Ovary (tissue), 10 donors: ENCODE measurements at regions of chr2 and their contacts with region 1.

Region 1: GRCh38 chr2:132547074-132547687 is 122.8 kb downstream of the LYPD1 start:
- DNase-seq: peak; percentile 24 to 68 (median 44)
- H3K4me3 ChIP-seq: no peak overlapping the region
- H3K27ac ChIP-seq: no peak overlapping the region
- H3K4me1 ChIP-seq: no peaks in the 10 kb centered on the region
- H3K27me3 ChIP-seq: no peaks in the 10 kb centered on the region
- CTCF ChIP-seq: peak in 1 of 3 donors; percentile 38
- EP300 ChIP-seq: no peak
- POLR2A ChIP-seq: no peak

Region 2: GRCh38 chr2:132384491-132385151 is 162.6 kb before region 1 on chr2:
- intact Hi-C with region 1: no loop called
- DNase-seq: no peak
- H3K4me3 ChIP-seq: no peak overlapping the region
- H3K27ac ChIP-seq: no peak overlapping the region
- H3K4me1 ChIP-seq: no peaks in the 10 kb centered on the region
- H3K27me3 ChIP-seq: no peaks in the 10 kb centered on the region
- CTCF ChIP-seq: no peak
- EP300 ChIP-seq: no peak
- POLR2A ChIP-seq: no peak

Region 3: GRCh38 chr2:133780099-133780839 is 1233.1 kb after region 1 on chr2:
- intact Hi-C with region 1: loop called in 1 of 4 experiments (anchors 10 kb)
- DNase-seq: peak in 2 of 5 donors; percentile 16 to 40
- H3K4me3 ChIP-seq: no peak overlapping the region
- H3K27ac ChIP-seq: no peak overlapping the region
- H3K4me1 ChIP-seq: no peaks in the 10 kb centered on the region
- H3K27me3 ChIP-seq: no peaks in the 10 kb centered on the region
- CTCF ChIP-seq: peak in 2 of 3 donors; percentile 32 to 61
- EP300 ChIP-seq: no peak
- POLR2A ChIP-seq: no peak

Region 4: DNA sequence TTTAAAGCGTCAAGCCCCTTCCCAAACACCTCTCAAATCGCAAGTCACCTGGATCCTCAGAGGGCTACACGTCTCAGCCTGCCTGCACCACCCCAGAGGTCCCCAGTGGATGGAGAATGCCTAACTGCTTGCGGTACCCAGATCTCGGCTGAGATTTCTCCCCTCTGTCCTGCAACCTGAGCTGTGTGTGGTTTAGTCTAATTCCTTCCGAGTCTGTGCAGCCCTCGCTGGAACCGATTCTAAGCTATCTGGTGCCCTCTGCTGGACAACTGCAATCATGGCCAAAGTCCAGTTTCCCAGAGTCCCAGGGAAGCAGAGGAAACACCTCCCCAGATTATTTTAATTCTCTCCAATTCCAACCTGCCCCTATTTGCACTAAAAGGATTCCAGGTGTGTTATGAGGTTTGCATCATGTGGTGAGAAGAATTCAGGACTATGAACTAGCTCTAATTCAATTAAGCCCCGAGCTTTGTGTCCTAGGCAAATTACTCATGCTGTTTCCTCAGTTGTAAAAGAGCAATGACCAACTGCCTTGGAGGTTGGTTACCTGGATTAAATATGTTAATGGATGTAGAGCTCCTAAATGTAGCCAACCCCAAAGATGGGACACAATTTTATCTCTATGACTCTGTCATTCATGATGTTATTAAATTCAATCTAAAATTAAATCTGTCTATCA is 1297.2 kb after region 1 on chr2:
- intact Hi-C with region 1: loop called in 1 of 4 experiments (anchors 10 kb)
- DNase-seq: peak; percentile 15 to 61 (median 59)
- H3K4me3 ChIP-seq: no peak overlapping the region
- H3K27ac ChIP-seq: no peak overlapping the region
- H3K4me1 ChIP-seq: no peaks in the 10 kb centered on the region
- H3K27me3 ChIP-seq: no peaks in the 10 kb centered on the region
- CTCF ChIP-seq: peak; percentile 33 to 54 (median 39)
- EP300 ChIP-seq: no peak
- POLR2A ChIP-seq: no peak